Head of caudate nucleus (tissue), 42 donors: ENCODE measurements at regions of chr11 and their contacts with region 1.

Region 1: DNA sequence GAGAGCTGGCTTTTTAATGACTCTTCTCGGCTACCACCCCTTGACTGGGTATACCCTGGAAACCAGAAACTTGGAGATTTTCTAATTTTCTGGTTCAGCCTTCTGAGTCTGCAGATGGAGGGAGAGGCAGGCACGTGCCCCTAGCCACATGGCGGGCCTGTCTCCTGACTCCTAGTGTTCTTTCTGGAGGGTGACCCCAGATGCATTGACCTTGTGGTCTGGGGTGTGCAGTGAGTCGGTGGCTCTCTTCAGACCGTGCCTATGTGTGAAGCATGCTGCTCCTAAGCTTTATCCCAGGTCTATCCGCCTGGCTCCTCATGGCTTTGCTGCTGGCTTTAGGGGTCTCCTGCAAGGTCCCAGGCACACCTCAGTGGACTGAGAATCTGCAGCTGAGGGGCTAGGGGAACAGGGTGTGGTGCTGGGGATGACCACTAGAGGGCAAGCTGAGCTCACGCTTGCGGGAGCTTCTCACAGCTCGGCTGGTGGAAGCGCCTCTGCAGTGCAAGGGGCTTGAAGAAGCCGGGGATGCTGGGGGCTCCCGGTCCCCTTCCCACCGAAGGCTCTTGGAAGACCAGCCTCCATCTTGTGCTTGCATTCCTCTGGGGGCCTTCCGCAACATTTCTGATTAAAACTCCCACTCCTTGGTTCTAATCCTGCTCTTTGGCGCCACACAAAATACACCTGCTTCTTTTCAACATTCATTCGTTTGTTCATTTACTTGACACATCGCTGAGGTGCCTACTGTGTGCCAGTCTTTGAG is 51.8 kb downstream of the OTOG start:
- DNase-seq: peak; percentile 66 to 93 (median 84)

Region 2: DNA sequence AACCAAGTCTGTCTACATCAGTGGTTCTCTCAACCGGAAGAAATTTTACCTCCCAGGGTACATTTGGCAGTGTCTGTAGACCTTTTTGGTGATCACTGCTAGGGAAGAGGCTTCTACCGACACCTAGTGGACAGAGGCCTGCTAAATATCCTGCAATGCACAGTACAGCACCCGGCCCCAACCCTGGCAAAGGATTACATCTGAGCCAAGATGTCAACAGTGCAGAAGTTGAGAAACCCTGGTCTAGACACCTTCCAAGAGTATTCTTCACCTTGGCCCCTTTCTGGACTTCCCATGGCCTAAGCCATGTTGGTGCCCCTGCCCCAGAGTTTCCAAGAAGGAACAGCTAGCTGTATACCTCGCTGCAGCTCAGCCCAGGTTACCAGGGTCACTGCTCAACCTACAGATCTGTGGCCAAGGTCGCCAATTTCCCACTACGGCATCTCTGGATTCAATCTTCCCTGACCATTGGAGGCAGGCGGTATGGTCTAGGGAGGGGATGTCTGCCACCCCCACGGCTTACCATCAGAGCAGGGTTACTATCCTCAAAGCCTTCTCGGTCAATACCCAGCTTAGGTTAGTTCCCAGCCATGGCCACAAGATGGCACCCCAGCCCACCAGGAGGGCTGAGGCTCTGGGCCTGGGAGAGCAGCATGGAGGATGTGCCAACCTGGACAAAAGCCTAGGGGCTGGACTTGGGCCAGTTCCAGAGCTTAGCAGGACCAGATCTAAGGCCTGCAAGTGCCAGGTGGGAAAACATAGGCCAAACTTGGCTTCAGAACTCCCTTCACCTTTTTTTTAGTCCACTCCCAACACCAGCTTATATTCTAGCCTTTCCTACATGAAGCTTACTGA is 132.0 kb after region 1 on chr11:
- intact Hi-C with region 1: loop called (anchors 10 kb)
- DNase-seq: peak; percentile 65 to 94 (median 86)

Region 3: DNA sequence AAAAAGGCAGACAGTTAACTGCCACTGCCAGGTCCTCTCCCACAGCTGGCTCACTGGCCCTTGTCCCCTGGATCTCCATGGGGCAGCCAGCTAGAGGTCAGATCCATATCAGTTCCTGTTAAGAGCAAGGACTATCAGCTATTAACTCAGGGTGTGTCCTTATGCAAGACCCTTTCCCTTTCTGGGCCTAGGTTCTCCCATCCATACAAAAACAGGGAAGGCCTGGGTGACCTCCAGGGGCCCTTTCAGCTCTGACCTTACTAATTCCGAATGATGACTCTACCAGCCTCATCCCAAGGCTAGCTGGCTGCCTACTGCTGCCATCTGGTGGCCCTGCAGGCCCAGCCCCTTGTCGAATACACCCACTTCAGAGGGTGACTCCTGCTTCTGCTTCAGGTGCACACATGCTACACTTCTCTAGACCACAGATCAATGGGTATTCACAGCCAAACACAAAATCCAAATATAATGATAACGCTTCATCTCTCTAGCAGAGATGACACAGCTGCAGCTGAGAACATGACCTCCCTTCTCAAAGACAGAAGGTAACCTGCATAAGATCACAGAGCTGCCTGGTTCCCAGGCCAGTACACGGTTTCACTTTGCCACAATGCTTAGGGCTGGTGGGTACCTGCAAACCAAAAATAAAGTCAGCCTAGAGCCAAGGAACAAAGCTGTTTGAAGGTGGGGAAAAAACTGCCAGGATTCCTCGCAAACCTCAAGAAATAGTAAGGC is 379.8 kb after region 1 on chr11:
- intact Hi-C with region 1: loop called (anchors 5 kb)
- DNase-seq: peak; percentile 24 to 83 (median 67)